AG04450 (cell line): ENCODE measurements at regions of chr7 and their contacts with region 1.

Region 1: DNA sequence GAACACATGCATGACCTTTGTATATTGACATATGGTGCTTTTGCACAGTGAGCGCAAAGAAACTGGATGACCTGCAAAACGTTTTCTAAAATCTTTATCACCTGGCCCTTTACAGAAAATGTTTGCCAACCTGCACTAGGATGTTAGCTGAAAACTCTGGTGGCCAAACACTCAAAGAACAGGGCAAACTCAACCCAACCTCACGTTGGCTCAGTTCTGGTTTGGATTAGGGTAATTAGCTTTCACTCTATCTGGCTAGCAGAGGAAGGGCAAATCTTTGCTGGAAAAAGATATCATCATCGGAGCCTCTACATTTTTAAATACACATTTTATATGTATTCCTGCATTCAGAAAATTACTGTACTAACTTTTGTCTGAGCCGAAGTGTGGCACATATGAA is 688.9 kb downstream of the PHTF2 start:
- DNase-seq: no peak
- H3K4me3 ChIP-seq: no peak overlapping the region
- H3K27ac ChIP-seq: no peak overlapping the region
- H3K27me3 ChIP-seq: no peaks in the 10 kb centered on the region
- CTCF ChIP-seq: no peak

Region 2: GRCh38 chr7:78535655-78536054 is 48.2 kb after region 1 on chr7:
- CTCF ChIA-PET with region 1: interaction called, 13 read pairs
- POLR2A ChIA-PET with region 1: no interaction called
- DNase-seq: no peak
- H3K4me3 ChIP-seq: no peak overlapping the region
- H3K27ac ChIP-seq: no peak overlapping the region
- H3K27me3 ChIP-seq: no peaks in the 10 kb centered on the region
- CTCF ChIP-seq: no peak

Region 3: GRCh38 chr7:78679112-78679876 is 191.8 kb after region 1 on chr7:
- CTCF ChIA-PET with region 1: no interaction called
- POLR2A ChIA-PET with region 1: no interaction called
- DNase-seq: no peak
- H3K4me3 ChIP-seq: no peak overlapping the region
- H3K27ac ChIP-seq: no peak overlapping the region
- H3K27me3 ChIP-seq: no peaks in the 10 kb centered on the region
- CTCF ChIP-seq: no peak